RWPE1 (cell line): ENCODE measurements at regions of chr10 and their contacts with region 1.

Region 1: DNA sequence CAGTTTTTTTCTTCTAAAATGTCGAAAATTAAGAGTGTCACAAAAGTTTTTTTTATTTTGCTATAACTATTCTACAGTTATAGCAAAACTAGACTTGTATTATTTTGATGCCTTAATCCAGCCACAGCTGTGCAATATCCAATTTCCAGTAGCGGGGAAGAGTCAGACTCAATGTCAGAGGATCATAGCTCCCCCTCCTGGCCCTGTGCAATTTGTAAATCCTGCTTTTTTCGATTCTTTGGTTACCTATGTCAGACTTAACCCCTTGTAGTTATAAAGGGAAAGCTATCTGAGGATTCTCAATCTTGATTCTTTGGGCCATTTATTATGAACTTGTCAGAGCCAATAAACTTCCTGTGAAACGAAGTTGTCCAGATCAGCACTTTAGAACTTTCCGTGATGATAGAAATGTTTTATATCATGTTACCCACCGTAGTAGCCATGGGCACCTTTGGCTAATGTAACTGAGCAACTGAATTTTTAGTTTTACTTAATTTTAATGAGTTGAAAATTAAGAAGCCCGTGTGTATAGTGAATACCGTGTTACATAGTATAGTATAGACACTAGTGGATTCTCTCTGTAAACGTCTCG is 87.7 kb upstream of the PRKCQ start:
- DNase-seq: peak; percentile 46
- H3K27ac ChIP-seq: no peak overlapping the region
- CTCF ChIP-seq: peak; percentile 71

Region 2: DNA sequence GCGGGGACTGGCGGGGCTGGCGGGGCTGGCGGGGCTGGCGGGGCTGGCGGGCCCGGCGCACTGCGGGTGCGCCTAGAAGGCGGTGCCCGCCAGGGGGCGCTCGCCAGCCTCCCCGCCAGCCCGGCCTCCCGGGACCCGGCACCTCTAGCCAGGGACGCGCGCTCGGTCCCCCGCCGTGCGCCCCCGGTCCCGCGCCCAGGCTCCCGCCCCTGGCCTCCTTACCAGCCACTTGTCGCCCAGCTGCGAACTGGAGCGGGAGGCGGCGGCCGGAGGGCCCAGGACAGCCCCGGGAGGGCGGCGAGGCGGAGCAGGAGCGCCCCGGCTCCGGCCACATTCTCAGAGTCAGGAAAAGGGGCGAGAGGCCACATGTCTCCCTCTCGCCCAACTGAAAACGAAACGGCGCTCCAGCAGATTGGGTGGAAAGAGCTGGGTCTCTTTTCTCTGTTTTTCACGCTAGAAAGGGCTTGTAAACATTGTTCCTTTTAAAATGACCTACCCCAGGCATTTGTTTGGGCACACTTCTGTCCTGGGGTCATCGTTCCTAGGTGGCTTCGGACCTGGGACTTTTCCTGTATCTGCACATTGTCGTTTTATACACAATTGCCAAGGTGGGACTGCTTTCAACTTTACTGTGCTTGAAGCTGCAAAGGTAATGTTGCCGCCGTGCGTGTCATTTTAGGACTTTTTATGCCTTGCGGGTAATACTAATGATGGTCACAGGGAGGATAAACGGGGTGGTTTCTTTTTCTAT is 87.3 kb before region 1 on chr10:
- CTCF ChIA-PET with region 1: interaction called, 10 read pairs
- POLR2A ChIA-PET with region 1: no interaction called
- DNase-seq: peak; percentile 59
- H3K27ac ChIP-seq: peak overlapping the region; percentile 63
- CTCF ChIP-seq: peak; percentile 79